Heart left ventricle (tissue), 16 donors: ENCODE measurements at regions of chr2 and their contacts with region 1.

Region 1: DNA sequence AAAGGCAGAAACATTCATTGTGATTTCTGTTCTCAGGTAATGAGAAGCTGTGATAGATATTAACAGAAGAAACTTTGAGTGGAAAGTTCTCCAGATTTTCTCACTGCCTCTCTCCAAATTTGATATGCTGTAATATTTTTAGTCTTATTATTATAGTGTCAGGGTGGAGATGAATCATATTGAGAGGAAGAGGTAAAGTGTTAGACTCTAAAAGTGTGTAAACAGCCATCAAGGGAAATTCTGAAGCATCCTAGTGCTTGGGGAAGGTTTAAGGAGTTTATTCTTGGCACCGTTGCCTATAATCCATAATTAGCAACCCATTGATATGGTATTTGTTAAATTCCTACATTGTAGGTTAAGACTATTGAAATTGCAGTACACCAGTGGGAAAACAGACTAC is 104.7 kb upstream of the NABP1 start:
- DNase-seq: no peak
- ATAC-seq: no peak
- H3K4me3 ChIP-seq: no peak overlapping the region
- H3K27ac ChIP-seq: no peak overlapping the region
- H3K4me1 ChIP-seq: peaks cover 0 to 20% (median 0%) of the 10 kb centered on the region in 12 donors
- H3K27me3 ChIP-seq: peaks cover 0 to 5% (median 0%) of the 10 kb centered on the region in 9 donors
- CTCF ChIP-seq: no peak
- POLR2A ChIP-seq: no peak

Region 2: GRCh38 chr2:191521608-191522208 is 51.5 kb before region 1 on chr2:
- intact Hi-C with region 1: no loop called
- DNase-seq: no peak
- ATAC-seq: no peak
- H3K4me3 ChIP-seq: no peak overlapping the region
- H3K27ac ChIP-seq: no peak overlapping the region
- H3K4me1 ChIP-seq: no peaks in the 10 kb centered on the region
- H3K27me3 ChIP-seq: no peaks in the 10 kb centered on the region
- CTCF ChIP-seq: peak; percentile 72 to 93 (median 80)
- POLR2A ChIP-seq: no peak

Region 3: GRCh38 chr2:191614764-191615163 is 41.5 kb after region 1 on chr2:
- intact Hi-C with region 1: loop called in 1 of 10 experiments (anchors 1 kb)
- DNase-seq: no peak
- ATAC-seq: no peak
- H3K4me3 ChIP-seq: no peak overlapping the region
- H3K27ac ChIP-seq: no peak overlapping the region
- H3K4me1 ChIP-seq: peaks cover 0 to 24% (median 0%) of the 10 kb centered on the region in 12 donors
- H3K27me3 ChIP-seq: peaks cover 0 to 5% (median 0%) of the 10 kb centered on the region in 9 donors
- CTCF ChIP-seq: no peak
- POLR2A ChIP-seq: no peak